ENCODE measurements at regions of chr11 and their contacts with region 1.

Region 1: DNA sequence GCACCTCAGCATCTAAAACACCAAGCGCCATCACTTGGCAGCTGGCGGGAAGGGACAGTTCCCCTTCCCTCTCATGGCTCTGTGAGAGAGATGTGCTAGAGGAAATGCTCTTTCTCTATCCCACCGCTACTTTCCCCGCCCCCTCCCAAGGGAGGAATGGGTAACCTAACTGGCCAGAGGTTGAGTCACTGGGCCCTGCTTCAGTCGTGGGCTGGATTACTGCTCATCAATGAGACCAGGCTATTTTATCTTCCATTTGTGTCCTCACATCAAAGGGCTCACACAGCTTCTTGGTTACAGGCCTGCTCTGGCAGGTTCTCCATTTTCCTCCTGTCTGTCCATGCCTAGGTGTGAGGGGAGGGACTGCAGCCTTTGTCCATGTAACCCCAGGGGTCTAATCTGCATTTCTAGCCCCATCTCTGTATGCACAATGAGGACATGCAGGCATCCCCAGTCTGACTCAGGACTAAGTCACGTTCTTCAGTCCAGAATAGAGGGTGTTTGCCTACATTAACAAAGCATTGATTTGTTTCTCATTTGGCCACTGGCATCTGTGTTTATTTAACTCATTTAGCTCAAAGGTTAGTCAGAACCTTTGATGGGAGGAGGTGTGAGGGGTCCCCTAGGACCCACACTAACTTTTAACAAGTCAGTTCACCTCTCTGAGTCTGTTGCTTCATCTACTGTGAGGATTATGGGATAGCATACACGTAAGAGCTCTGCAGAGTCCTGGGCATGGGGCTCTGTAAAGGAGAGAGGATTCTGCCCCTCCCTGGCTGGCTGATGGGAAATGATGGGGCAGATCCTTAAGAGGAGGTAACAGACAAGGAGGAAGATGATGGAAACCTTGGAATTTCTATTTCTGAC is 99.1 kb downstream of the XRRA1 start:
- DNase-seq: peak; percentile 81
- H3K4me3 ChIP-seq: no peak overlapping the region
- H3K4me3 Mint-ChIP-seq: peak overlapping the region; percentile 61
- H3K27ac Mint-ChIP-seq: peak overlapping the region; percentile 93
- H3K4me1 ChIP-seq: peaks cover 35% of the 10 kb centered on the region
- H3K4me1 Mint-ChIP-seq: peaks cover 12% of the 10 kb centered on the region
- H3K27me3 ChIP-seq: no peaks in the 10 kb centered on the region
- H3K27me3 Mint-ChIP-seq: no peaks in the 10 kb centered on the region
- CTCF ChIP-seq: no peak

Region 2: GRCh38 chr11:74748211-74749127 is 101.3 kb before region 1 on chr11 and contains the start of gene RNF169:
- CTCF ChIA-PET with region 1: no interaction called
- POLR2A ChIA-PET with region 1: interaction called, 11 read pairs
- intact Hi-C with region 1: loop called (anchors 1 kb)
- DNase-seq: peak; percentile 97 to 98
- H3K4me3 ChIP-seq: peak within 1 kb of the TSS; percentile 88
- H3K4me3 Mint-ChIP-seq: peak within 1 kb of the TSS; percentile 88
- H3K27ac Mint-ChIP-seq: peak within 1 kb of the TSS; percentile 76
- H3K4me1 ChIP-seq: peaks cover 9% of the 10 kb centered on the region
- H3K4me1 Mint-ChIP-seq: peaks cover 18% of the 10 kb centered on the region
- H3K27me3 ChIP-seq: no peaks in the 10 kb centered on the region
- H3K27me3 Mint-ChIP-seq: no peaks in the 10 kb centered on the region
- CTCF ChIP-seq: no peak
- total RNA-seq, gene RNF169: 28.0 and 28.7 TPM in 2 replicates

Region 3: GRCh38 chr11:74819400-74819799 is 30.4 kb before region 1 on chr11:
- CTCF ChIA-PET with region 1: no interaction called
- POLR2A ChIA-PET with region 1: no interaction called
- intact Hi-C with region 1: loop called (anchors 1 kb)
- DNase-seq: peak in 1 of 2 experiments; percentile 47
- H3K4me3 ChIP-seq: no peak overlapping the region
- H3K4me3 Mint-ChIP-seq: no peak overlapping the region
- H3K27ac Mint-ChIP-seq: peak overlapping the region; percentile 51
- H3K4me1 ChIP-seq: peaks cover 31% of the 10 kb centered on the region
- H3K4me1 Mint-ChIP-seq: peaks cover 37% of the 10 kb centered on the region
- H3K27me3 ChIP-seq: no peaks in the 10 kb centered on the region
- H3K27me3 Mint-ChIP-seq: no peaks in the 10 kb centered on the region
- CTCF ChIP-seq: no peak

Region 4: GRCh38 chr11:75055471-75055870 is 205.7 kb after region 1 on chr11:
- CTCF ChIA-PET with region 1: no interaction called
- POLR2A ChIA-PET with region 1: no interaction called
- intact Hi-C with region 1: no loop called
- DNase-seq: no peak
- H3K4me3 ChIP-seq: no peak overlapping the region
- H3K4me3 Mint-ChIP-seq: no peak overlapping the region
- H3K27ac Mint-ChIP-seq: no peak overlapping the region
- H3K4me1 ChIP-seq: no peaks in the 10 kb centered on the region
- H3K4me1 Mint-ChIP-seq: no peaks in the 10 kb centered on the region
- H3K27me3 ChIP-seq: no peaks in the 10 kb centered on the region; the same call in 1 of the 2 replicates
- H3K27me3 Mint-ChIP-seq: peaks cover 7% of the 10 kb centered on the region
- CTCF ChIP-seq: no peak